ENCODE measurements at regions of chr5 and their contacts with region 1.

Region 1: GRCh38 chr5:134041570-134042411 is 37.0 kb upstream of the VDAC1 start:
- DNase-seq: no peak
- H3K4me3 ChIP-seq: no peak overlapping the region
- CTCF ChIP-seq: no peak

Region 2: DNA sequence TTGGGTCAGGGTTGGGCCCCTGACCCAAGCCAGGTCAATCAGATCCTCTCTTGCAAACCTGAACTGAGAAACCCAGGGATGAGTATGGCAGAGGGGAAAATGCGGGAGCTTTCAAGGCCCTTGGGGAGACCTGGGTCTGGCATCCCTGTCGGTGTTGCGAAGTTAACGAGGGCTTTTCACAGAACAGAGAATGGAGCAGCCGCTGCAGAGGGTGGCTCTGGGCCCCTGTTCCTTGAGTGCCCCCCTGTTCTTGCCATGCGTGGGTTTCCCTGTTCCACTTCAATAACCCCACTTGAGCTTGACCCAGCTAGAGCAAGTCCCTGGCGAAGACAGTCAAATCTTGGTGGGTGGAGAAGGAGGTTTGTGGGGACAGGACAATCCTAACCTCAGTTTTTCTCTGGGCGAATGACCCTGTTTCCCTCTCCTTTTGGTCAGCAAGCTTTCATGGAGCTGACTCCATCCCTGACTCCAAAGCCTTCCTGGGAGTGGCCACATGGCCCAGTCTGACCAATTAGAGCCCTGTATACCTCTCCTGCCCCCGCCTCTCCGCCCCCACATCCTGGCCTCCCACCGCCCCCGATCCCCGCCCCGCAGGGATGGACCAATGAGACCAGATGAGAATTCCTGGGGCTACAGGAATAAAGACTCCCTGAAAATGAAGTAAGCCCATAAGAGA is 34.1 kb before region 1 on chr5:
- CTCF ChIA-PET with region 1: interaction called, 23 read pairs
- POLR2A ChIA-PET with region 1: no interaction called
- DNase-seq: no peak
- H3K4me3 ChIP-seq: no peak overlapping the region
- CTCF ChIP-seq: no peak

Region 3: GRCh38 chr5:134053840-134054338 is 12.1 kb after region 1 on chr5:
- CTCF ChIA-PET with region 1: interaction called, 100 read pairs
- POLR2A ChIA-PET with region 1: no interaction called
- DNase-seq: no peak
- H3K4me3 ChIP-seq: no peak overlapping the region
- CTCF ChIP-seq: no peak

Region 4: DNA sequence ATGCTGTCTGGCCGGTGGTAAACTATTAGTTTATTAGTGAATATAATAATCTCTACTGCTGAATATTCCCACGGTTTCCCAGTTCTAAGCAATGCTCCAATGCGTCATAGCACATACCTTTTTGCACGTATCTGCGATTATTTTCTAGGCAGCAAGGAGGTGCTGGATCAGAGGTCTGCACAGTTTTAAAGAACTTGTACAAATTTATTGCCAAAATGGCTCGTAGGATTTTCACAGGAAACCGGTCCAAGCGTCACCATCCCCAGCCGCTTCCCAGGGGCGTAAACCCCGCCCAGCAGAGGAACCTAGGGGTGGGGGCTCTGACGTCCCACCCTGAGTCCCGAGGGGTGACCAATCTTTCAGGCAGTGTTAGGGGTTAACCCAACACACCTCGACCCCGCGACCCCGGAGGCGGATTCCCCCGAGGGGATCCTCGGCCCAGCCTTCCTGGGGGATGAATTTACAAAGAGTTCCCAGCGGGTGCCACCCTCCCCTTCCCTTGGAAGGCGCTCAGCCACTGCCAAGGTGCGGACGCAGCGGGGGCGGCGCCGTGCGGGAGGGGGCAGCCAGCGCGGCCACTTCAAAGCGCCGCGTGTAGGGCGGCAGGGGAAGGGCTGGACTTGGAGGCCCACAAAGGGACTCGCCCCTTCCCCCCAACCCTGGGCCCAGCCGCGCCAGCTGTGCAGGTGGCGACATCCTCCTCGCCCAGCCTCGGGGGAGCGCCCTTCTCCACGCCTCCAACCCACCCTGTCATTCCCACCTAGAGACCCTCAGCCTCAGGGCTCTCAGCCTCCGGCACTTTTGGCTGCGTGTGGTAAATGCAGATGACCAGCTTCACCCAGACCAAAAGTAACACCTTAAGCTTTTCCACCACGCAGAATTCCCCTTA is 29.2 kb after region 1 on chr5:
- CTCF ChIA-PET with region 1: interaction called, 22 read pairs
- POLR2A ChIA-PET with region 1: no interaction called
- DNase-seq: no peak
- H3K4me3 ChIP-seq: peak overlapping the region; percentile 29
- CTCF ChIP-seq: no peak

Region 5: DNA sequence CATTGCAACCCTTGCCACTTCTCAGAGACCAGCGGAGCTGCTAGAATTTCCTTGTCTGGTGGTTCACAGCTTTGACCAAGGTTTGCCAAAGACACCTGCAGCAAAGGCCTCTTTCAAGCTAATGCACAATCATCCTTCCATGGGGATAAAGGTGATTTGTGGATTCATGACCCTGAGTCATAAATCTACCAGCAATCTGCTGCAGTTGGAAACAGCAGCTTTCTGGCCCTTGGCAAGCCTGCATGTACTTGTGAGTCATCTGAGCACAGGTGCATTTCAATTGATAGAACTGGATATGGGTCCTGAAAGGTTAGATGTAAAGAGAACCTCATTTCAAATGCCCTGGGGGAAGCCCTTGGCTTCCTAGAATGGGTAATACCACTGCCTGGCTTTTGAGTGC is 51.1 kb after region 1 on chr5:
- CTCF ChIA-PET with region 1: interaction called, 11 read pairs
- POLR2A ChIA-PET with region 1: no interaction called
- DNase-seq: no peak
- H3K4me3 ChIP-seq: no peak overlapping the region
- CTCF ChIP-seq: no peak

Region 6: DNA sequence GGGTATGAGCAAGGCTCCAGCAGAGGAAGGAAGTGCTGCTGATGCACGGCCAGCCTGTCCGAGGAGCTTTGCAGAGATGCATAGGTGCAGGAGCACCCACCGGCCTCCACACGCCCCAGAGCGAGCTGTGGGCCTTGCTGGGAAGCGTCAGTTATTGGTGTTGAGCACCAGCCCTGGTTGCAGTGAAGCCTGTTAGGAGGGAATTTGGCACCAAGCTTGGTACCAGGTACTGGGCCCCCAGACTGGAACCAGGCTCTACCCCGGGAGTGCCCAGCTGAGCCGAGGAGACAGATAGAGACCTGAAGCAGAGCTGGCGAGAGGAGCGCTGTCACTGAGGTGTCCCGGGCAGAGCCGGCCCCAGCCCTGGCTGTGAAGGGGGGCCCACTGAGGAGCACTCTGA is 77.9 kb after region 1 on chr5:
- CTCF ChIA-PET with region 1: interaction called, 1,500 read pairs
- POLR2A ChIA-PET with region 1: no interaction called
- DNase-seq: no peak
- H3K4me3 ChIP-seq: no peak overlapping the region
- CTCF ChIP-seq: no peak

Region 7: GRCh38 chr5:134176511-134177368 is 134.9 kb after region 1 on chr5 and contains the start of gene SKP1:
- CTCF ChIA-PET with region 1: interaction called, 10 read pairs
- POLR2A ChIA-PET with region 1: no interaction called
- DNase-seq: no peak
- H3K4me3 ChIP-seq: peak within 1 kb of the TSS; percentile 97
- CTCF ChIP-seq: no peak

Measured in AG04449 (cell line).